ENCODE measurements at regions of chr4 and their contacts with region 1.

Region 1: GRCh38 chr4:158253350-158253980 is 43.2 kb downstream of the TMEM144 start:
- DNase-seq: no peak
- ATAC-seq: peak; percentile 89
- H3K4me3 ChIP-seq: no peak overlapping the region
- H3K27ac ChIP-seq: no peak overlapping the region
- H3K4me1 ChIP-seq: no peaks in the 10 kb centered on the region
- H3K27me3 ChIP-seq: no peaks in the 10 kb centered on the region
- CTCF ChIP-seq: peak; percentile 50 to 72 (median 63); a peak in 5 of 6 replicates
- EP300 ChIP-seq: no peak
- POLR2A ChIP-seq: no peak
- RAD21 ChIP-seq: peak; percentile 67

Region 2: DNA sequence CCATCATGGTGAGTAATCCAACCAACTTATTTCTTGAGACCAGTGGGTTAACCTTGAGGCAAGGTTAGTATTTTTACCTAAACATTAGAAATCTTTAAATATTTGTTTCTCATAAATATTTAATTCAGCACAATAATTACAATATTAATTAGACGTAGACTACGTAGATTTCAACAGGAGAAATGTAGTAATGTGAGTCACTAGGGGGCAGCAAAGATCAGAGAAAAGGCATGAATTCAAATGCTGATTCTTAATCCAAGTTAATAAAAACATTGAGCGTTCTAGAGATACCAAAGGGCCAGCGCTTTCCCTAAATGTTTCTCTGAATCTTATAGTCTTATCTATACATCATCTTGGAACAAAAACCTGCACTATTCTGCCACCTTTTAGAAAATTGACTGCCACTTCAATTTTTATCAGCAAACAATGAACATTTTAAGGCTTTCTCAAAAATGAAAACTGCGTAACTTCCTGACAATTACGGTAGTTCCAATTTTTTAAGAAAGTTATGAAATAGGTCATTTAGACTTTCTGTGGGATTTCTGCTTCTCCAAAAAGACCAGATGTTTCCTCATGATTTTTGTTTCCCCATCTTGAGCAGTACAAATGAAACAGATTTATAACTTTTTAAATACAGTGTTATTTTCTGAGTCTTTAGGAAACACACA is 261.3 kb before region 1 on chr4:
- CTCF ChIA-PET with region 1: interaction called, 12 read pairs
- POLR2A ChIA-PET with region 1: no interaction called
- RAD21 ChIA-PET with region 1: no interaction called
- SMC1A ChIA-PET with region 1: no interaction called
- in situ Hi-C with region 1: loop called (anchors 10 kb)
- intact Hi-C with region 1: loop called (anchors 1 kb)
- DNase-seq: no peak
- ATAC-seq: peak; percentile 58
- H3K4me3 ChIP-seq: no peak overlapping the region
- H3K27ac ChIP-seq: no peak overlapping the region
- H3K4me1 ChIP-seq: no peaks in the 10 kb centered on the region
- H3K27me3 ChIP-seq: no peaks in the 10 kb centered on the region
- CTCF ChIP-seq: peak; percentile 48 to 59 (median 52)
- EP300 ChIP-seq: no peak
- POLR2A ChIP-seq: no peak
- RAD21 ChIP-seq: peak; percentile 67

Region 3: GRCh38 chr4:158193171-158193749 is 60.2 kb before region 1 on chr4:
- CTCF ChIA-PET with region 1: interaction called, 14 read pairs
- POLR2A ChIA-PET with region 1: no interaction called
- RAD21 ChIA-PET with region 1: no interaction called
- SMC1A ChIA-PET with region 1: interaction called, 3 read pairs
- in situ Hi-C with region 1: no loop called
- intact Hi-C with region 1: loop called (anchors 2 kb)
- DNase-seq: no peak
- ATAC-seq: peak; percentile 53
- H3K4me3 ChIP-seq: no peak overlapping the region
- H3K27ac ChIP-seq: no peak overlapping the region
- H3K4me1 ChIP-seq: no peaks in the 10 kb centered on the region
- H3K27me3 ChIP-seq: no peaks in the 10 kb centered on the region
- CTCF ChIP-seq: peak; percentile 37 to 44 (median 40); a peak in 5 of 6 replicates
- EP300 ChIP-seq: no peak
- POLR2A ChIP-seq: no peak
- RAD21 ChIP-seq: peak; percentile 48

Region 4: DNA sequence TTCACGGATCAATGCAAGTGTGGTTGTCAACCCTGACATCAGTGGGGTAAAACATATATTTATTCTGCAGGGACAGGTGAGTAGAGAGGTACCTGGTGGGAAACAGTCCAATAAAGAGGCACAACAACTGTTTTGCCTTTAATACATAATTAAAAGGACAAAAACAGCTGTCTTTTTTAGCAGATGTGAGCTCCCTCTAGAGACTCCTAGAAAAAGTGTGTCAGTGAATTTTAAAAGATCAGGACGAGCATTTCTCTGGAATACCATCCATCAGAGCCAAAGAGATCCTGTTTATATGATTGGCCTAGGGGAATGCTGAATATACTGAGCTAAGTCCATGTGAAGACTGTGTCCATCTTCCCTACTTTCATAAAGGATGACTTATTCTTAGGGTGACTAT is 15.1 kb after region 1 on chr4:
- CTCF ChIA-PET with region 1: interaction called, 10 read pairs
- POLR2A ChIA-PET with region 1: no interaction called
- RAD21 ChIA-PET with region 1: interaction called, 3 read pairs
- SMC1A ChIA-PET with region 1: no interaction called
- in situ Hi-C with region 1: no loop called
- intact Hi-C with region 1: no loop called
- DNase-seq: no peak
- ATAC-seq: no peak
- H3K4me3 ChIP-seq: no peak overlapping the region
- H3K27ac ChIP-seq: no peak overlapping the region
- H3K4me1 ChIP-seq: no peaks in the 10 kb centered on the region
- H3K27me3 ChIP-seq: no peaks in the 10 kb centered on the region
- CTCF ChIP-seq: no peak
- EP300 ChIP-seq: no peak
- POLR2A ChIP-seq: no peak
- RAD21 ChIP-seq: no peak